Naive thymus-derived CD4-positive, alpha-beta T cell (primary cell): ENCODE measurements at regions of chr20 and their contacts with region 1.

Region 1: DNA sequence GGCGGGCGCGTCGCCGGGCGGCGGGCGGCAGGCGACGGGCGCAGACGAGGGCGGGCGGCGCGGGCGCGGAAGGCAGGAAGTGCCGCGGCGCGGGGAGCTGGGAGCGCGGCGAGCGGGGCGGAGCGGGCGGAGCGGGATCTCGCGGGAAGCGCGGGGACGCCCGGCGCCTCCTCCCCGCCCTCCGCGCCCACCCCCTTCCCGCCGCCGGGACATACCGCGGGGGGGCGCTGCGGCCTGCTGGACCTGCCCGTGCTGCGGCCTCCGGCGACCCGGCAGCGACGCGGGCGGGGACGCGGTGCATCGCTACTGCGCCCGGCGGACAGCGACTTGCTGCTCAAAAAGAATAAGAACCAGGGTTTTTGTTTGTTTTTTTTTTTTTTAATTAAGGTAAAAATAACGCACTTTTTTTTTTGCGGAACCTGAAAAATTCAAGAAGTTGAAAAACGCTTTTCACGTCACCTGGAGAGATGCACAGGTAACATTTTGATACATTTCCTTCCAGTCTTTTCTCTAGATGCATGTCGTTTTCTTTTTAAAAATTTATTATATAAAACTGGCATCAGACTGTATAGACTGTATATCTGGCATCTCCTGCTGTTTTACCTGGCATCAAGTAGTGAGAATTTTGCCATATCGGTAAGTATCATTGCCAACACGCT is at the start of gene CENPB:
- DNase-seq: peak; percentile 74 to 98 (median 88)
- ATAC-seq: peak; percentile 96
- H3K4me3 ChIP-seq: peak within 1 kb of the TSS; percentile 29
- H3K4me3 Mint-ChIP-seq: peak within 1 kb of the TSS; percentile 76 to 87 (median 83)
- H3K27ac ChIP-seq: peak within 1 kb of the TSS; percentile 62
- H3K27ac Mint-ChIP-seq: peak within 1 kb of the TSS; percentile 51 to 90 (median 76)
- H3K4me1 ChIP-seq: peaks cover 7 to 9% of the 10 kb centered on the region in 2 donors
- H3K4me1 Mint-ChIP-seq: peaks cover 30 to 45% (median 41%) of the 10 kb centered on the region in 7 donors
- H3K27me3 ChIP-seq: no peaks in the 10 kb centered on the region
- H3K27me3 Mint-ChIP-seq: peaks cover 0 to 12% (median 0%) of the 10 kb centered on the region in 5 donors
- total RNA-seq, gene CENPB: 35.3 to 73.6 (median 50.0) TPM

Region 2: DNA sequence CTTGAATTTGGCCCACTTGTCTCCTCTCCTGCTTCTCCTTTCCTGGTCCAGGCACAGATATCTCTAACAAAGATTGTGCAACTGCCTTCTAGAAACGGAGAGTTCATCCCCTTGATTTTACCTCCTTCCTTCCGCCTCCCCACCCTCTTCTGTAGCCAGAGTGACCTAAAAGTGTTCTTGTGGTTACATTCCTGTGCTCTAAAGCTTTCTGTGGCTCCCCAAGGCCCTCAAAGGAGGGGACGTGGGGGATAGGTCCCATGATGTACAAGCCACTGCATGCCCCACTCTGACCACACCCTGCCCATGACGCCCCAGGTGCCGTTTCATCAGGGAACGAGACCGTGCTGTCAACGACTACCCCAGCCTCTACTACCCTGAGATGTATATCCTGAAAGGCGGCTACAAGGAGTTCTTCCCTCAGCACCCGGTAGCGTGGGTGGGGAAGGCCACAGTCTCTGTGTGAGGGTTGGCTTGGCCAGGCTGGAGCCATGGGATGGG is 17.5 kb after region 1 on chr20:
- CTCF ChIA-PET with region 1: interaction called, 6 read pairs
- POLR2A ChIA-PET with region 1: interaction called, 24 read pairs
- intact Hi-C with region 1: no loop called
- DNase-seq: no peak
- ATAC-seq: no peak
- H3K4me3 ChIP-seq: no peak overlapping the region
- H3K4me3 Mint-ChIP-seq: peak overlapping the region in 2 of 10 donors; percentile 9 to 35
- H3K27ac ChIP-seq: peak overlapping the region; percentile 78
- H3K27ac Mint-ChIP-seq: peak overlapping the region; percentile 78 to 98 (median 91)
- H3K4me1 ChIP-seq: peaks cover 44 to 45% of the 10 kb centered on the region in 2 donors
- H3K4me1 Mint-ChIP-seq: peaks cover 46 to 87% (median 65%) of the 10 kb centered on the region in 7 donors
- H3K27me3 ChIP-seq: no peaks in the 10 kb centered on the region
- H3K27me3 Mint-ChIP-seq: no peaks in the 10 kb centered on the region

Region 3: GRCh38 chr20:3811467-3812258 is 24.9 kb after region 1 on chr20:
- CTCF ChIA-PET with region 1: interaction called, 9 read pairs
- POLR2A ChIA-PET with region 1: no interaction called
- intact Hi-C with region 1: loop called in 1 of 2 experiments (anchors 1 kb)
- DNase-seq: peak; percentile 79 to 96 (median 91)
- ATAC-seq: peak; percentile 97
- H3K4me3 ChIP-seq: peak overlapping the region; percentile 62
- H3K4me3 Mint-ChIP-seq: peak overlapping the region; percentile 77 to 96 (median 90)
- H3K27ac ChIP-seq: peak overlapping the region; percentile 84
- H3K27ac Mint-ChIP-seq: peak overlapping the region; percentile 94 to 100 (median 98)
- H3K4me1 ChIP-seq: peaks cover 70% of the 10 kb centered on the region in 2 donors
- H3K4me1 Mint-ChIP-seq: peaks cover 56 to 80% (median 71%) of the 10 kb centered on the region in 7 donors
- H3K27me3 ChIP-seq: no peaks in the 10 kb centered on the region
- H3K27me3 Mint-ChIP-seq: no peaks in the 10 kb centered on the region

Region 4: DNA sequence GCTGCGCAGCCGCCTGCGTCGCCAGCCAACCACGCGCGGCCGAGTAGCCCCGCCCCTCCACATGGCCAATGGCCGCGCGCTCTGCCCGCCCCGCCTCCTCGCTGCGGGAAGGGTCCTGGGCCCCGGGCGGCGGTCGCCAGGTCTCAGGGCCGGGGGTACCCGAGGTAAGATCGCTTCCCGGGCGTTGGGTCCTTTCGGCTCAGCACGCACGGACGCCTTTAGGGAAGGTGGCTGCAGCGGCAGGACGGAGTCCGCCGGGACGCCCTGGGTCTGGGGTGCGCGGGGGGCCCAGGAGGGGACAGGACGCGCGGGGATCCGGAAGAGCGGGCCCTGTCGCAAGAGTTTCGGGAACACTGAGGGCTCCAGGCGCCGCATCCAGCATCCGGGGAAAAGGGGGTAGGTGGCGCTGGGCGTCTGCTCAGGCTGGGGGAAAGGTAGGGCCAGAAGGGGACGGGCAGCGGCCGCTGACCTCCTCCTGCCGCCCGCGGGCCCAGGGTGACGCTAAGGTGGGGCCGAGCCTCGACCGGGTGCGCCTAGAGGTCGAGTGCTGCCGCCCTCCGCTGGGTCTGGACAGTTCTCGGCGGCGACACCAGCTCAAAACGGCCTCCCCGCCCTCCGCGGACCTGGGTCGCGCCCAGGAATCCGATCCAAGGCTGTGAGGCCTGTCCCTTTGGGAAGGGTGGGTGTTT is 60.1 kb after region 1 on chr20 and contains the start of gene MAVS:
- CTCF ChIA-PET with region 1: interaction called, 3 read pairs
- POLR2A ChIA-PET with region 1: interaction called, 8 read pairs
- intact Hi-C with region 1: loop called (anchors 1 to 2 kb)
- DNase-seq: peak; percentile 76 to 93 (median 82)
- ATAC-seq: peak; percentile 100
- H3K4me3 ChIP-seq: peak within 1 kb of the TSS; percentile 86
- H3K4me3 Mint-ChIP-seq: peak within 1 kb of the TSS; percentile 85 to 93 (median 90)
- H3K27ac ChIP-seq: peak within 1 kb of the TSS; percentile 96
- H3K27ac Mint-ChIP-seq: peak within 1 kb of the TSS; percentile 59 to 95 (median 90)
- H3K4me1 ChIP-seq: peaks cover 0 to 10% of the 10 kb centered on the region in 2 donors
- H3K4me1 Mint-ChIP-seq: peaks cover 16 to 30% (median 27%) of the 10 kb centered on the region in 7 donors
- H3K27me3 ChIP-seq: no peaks in the 10 kb centered on the region
- H3K27me3 Mint-ChIP-seq: no peaks in the 10 kb centered on the region
- total RNA-seq, gene MAVS: 23.3 to 49.9 (median 41.5) TPM

Region 5: DNA sequence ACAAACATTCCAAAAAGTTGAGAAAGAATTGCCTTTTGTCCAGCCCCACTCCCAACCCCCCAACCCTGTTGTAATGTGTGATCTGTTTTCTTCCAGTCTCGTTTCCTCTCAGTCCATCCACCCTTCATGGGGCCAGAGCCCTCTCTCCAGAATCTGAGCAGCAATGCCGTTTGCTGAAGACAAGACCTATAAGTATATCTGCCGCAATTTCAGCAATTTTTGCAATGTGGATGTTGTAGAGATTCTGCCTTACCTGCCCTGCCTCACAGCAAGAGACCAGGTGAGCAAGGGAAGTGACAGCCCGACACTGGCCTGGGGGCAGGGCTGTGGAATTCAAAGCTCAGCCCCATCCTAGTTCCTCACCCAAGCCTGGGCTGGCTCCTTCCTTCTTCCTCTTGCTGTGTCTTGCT is 67.7 kb after region 1 on chr20:
- CTCF ChIA-PET with region 1: interaction called, 7 read pairs
- POLR2A ChIA-PET with region 1: interaction called, 5 read pairs
- intact Hi-C with region 1: loop called (anchors 1 kb)
- DNase-seq: no peak
- ATAC-seq: peak; percentile 48
- H3K4me3 ChIP-seq: no peak overlapping the region
- H3K4me3 Mint-ChIP-seq: no peak overlapping the region
- H3K27ac ChIP-seq: no peak overlapping the region
- H3K27ac Mint-ChIP-seq: peak overlapping the region in 3 of 9 donors; percentile 33 to 41 (median 33)
- H3K4me1 ChIP-seq: peaks cover 0 to 3% of the 10 kb centered on the region in 2 donors
- H3K4me1 Mint-ChIP-seq: peaks cover 12 to 22% (median 16%) of the 10 kb centered on the region in 7 donors
- H3K27me3 ChIP-seq: no peaks in the 10 kb centered on the region
- H3K27me3 Mint-ChIP-seq: no peaks in the 10 kb centered on the region